Caco-2 (cell line): ENCODE measurements at regions of chr17 and their contacts with region 1.

Region 1: DNA sequence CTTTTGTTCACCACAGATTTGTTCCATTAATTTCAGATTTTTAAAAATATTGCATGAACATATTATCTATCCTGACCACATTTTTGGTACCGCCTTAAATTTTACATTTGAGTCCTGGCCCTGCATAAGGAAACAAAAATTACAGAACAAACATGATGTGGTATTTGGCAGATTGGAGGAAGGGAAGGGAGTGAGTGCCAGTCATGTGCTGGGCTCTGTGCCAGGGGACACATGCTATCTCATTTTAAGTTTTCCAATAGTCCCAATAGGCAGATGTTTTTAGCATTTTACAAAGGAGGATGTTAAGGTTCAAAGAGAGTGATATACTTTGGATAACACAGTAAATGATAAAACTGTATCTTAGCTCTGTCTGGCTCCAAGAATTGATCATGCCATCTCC is 185.1 kb downstream of the CDK5R1 start:
- DNase-seq: no peak
- H3K4me3 ChIP-seq: no peak overlapping the region
- H3K4me3 Mint-ChIP-seq: no peak overlapping the region
- H3K27ac Mint-ChIP-seq: no peak overlapping the region
- H3K4me1 ChIP-seq: no peaks in the 10 kb centered on the region
- H3K4me1 Mint-ChIP-seq: no peaks in the 10 kb centered on the region
- H3K27me3 ChIP-seq: no peaks in the 10 kb centered on the region
- H3K27me3 Mint-ChIP-seq: no peaks in the 10 kb centered on the region
- CTCF ChIP-seq: no peak

Region 2: GRCh38 chr17:32646941-32647340 is 25.0 kb before region 1 on chr17:
- CTCF ChIA-PET with region 1: no interaction called
- POLR2A ChIA-PET with region 1: no interaction called
- intact Hi-C with region 1: no loop called
- DNase-seq: no peak
- H3K4me3 ChIP-seq: no peak overlapping the region
- H3K4me3 Mint-ChIP-seq: no peak overlapping the region
- H3K27ac Mint-ChIP-seq: no peak overlapping the region
- H3K4me1 ChIP-seq: no peaks in the 10 kb centered on the region
- H3K4me1 Mint-ChIP-seq: no peaks in the 10 kb centered on the region
- H3K27me3 ChIP-seq: no peaks in the 10 kb centered on the region
- H3K27me3 Mint-ChIP-seq: no peaks in the 10 kb centered on the region
- CTCF ChIP-seq: no peak

Region 3: GRCh38 chr17:32693194-32693897 is 21.4 kb after region 1 on chr17:
- CTCF ChIA-PET with region 1: no interaction called
- POLR2A ChIA-PET with region 1: interaction called, 22 read pairs
- intact Hi-C with region 1: no loop called
- DNase-seq: no peak
- H3K4me3 ChIP-seq: no peak overlapping the region
- H3K4me3 Mint-ChIP-seq: no peak overlapping the region
- H3K27ac Mint-ChIP-seq: no peak overlapping the region
- H3K4me1 ChIP-seq: no peaks in the 10 kb centered on the region
- H3K4me1 Mint-ChIP-seq: no peaks in the 10 kb centered on the region
- H3K27me3 ChIP-seq: no peaks in the 10 kb centered on the region
- H3K27me3 Mint-ChIP-seq: no peaks in the 10 kb centered on the region
- CTCF ChIP-seq: no peak